BJ (cell line): ENCODE measurements at regions of chr3 and their contacts with region 1.

Region 1: GRCh38 chr3:53219895-53220483 is 35.8 kb downstream of the TKT start:
- DNase-seq: peak; percentile 17
- H3K4me3 ChIP-seq: no peak overlapping the region
- H3K27me3 ChIP-seq: no peaks in the 10 kb centered on the region
- CTCF ChIP-seq: peak; percentile 98

Region 2: DNA sequence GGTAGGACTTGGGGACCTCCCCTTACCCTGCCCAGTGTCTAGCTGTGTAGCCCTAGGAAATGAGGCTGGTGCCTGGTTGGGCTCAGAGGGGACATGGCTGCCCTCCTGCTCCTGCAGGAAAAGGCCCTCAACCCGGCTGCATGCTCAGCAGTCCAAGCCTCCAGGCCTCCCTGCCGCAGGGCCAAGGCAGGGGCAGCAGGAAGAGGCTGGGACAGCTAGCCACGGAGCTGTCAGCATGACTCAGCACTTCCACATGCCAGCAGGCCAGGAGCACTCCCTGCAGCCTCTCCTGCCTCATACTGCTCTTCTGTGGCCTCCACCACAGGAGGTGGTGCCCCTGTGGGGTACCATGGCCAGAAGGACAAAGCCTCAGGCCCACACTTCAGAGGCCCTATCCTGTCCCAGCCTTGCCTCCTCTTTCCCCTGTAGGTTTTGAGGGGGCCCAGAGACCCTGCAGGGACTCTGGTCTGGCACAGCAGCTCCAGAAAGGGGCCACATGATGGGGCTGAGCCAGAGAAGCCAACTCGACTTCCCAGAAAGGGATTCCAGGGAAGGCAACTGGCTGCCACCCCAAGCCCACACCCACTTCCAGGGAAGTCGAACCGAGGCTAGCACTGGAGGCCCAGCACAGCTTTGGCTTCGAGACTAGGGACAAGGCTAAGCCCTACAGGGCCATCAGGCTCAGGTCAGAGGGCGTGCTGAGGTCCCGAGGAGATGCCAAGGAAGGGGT is 16.3 kb after region 1 on chr3:
- CTCF ChIA-PET with region 1: interaction called, 12 read pairs
- POLR2A ChIA-PET with region 1: no interaction called
- DNase-seq: peak; percentile 48
- H3K4me3 ChIP-seq: no peak overlapping the region
- H3K27me3 ChIP-seq: no peaks in the 10 kb centered on the region
- CTCF ChIP-seq: no peak